Astrocyte of the cerebellum (primary cell): ENCODE measurements at regions of chr3 and their contacts with region 1.

Region 1: GRCh38 chr3:185677146-185677829 is 91.2 kb downstream of the SENP2 start:
- DNase-seq: peak; percentile 67
- H3K4me3 ChIP-seq: no peak overlapping the region
- CTCF ChIP-seq: peak; percentile 80

Region 2: GRCh38 chr3:185900226-185900625 is 222.9 kb after region 1 on chr3:
- in situ Hi-C with region 1: loop called (anchors 25 kb)
- DNase-seq: peak; percentile 78
- H3K4me3 ChIP-seq: no peak overlapping the region
- CTCF ChIP-seq: no peak